ENCODE measurements at regions of chr2 and their contacts with region 1.

Region 1: DNA sequence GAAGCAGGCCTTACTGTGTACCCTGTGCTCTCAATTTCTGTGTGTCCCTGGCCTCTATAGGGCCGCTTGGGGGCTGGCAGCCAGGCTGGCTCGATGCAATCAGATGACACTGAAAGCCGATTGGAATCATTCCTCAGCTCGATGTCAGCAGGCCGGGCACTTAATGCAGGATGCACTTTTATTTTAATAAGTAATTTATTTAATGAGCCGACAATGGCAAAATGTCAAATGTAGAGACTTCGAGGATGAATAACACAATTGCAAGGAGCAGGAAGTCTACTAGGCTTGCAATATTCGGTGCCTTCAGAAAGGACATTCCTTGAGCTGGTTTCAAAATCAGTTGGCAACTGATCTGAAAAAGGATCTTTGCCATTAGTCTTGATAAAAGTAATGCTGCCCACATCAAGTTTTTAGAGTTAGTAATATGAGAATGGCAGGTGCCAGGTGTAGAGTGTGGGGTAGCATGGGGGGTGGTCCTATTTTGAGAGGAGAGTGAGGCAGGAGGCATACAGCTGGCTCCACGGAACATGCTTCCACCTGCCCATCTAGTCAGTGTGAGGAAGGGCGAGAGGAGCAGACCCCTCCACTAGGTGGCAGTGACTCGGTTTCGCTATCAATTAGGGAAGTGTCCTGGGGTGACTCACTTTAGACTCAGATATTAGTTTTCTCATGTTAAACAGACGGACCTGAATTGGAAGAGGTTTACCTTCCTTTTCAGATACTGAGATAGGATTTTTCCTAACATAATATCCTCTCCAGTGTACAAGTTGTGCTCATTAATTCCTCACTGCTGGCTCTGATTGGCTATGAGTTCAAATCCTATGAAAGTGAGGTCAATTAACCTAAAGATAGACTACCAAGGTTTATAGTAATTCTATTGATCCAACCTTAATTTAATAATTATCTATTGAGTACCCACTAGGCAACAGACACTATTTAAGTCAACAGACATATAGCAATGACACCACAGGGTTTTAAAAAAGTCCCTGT is 80.9 kb downstream of the NABP1 start:
- DNase-seq: peak; percentile 39
- ATAC-seq: peak; percentile 100
- H3K4me3 Mint-ChIP-seq: peak overlapping the region; percentile 13
- H3K27ac Mint-ChIP-seq: peak overlapping the region; percentile 8
- H3K4me1 Mint-ChIP-seq: peaks cover 6% of the 10 kb centered on the region
- H3K27me3 Mint-ChIP-seq: no peaks in the 10 kb centered on the region
- CTCF ChIP-seq: no peak

Region 2: GRCh38 chr2:191691016-191691735 is 67.6 kb before region 1 on chr2:
- CTCF ChIA-PET with region 1: no interaction called
- POLR2A ChIA-PET with region 1: no interaction called
- intact Hi-C with region 1: loop called (anchors 2 kb)
- DNase-seq: no peak
- ATAC-seq: peak; percentile 85
- H3K4me3 Mint-ChIP-seq: no peak overlapping the region
- H3K27ac Mint-ChIP-seq: peak overlapping the region; percentile 41
- H3K4me1 Mint-ChIP-seq: peaks cover 34% of the 10 kb centered on the region
- H3K27me3 Mint-ChIP-seq: no peaks in the 10 kb centered on the region
- CTCF ChIP-seq: no peak

Region 3: GRCh38 chr2:191783416-191783815 is 24.6 kb after region 1 on chr2:
- CTCF ChIA-PET with region 1: no interaction called
- POLR2A ChIA-PET with region 1: no interaction called
- intact Hi-C with region 1: no loop called
- DNase-seq: no peak
- ATAC-seq: no peak
- H3K4me3 Mint-ChIP-seq: no peak overlapping the region
- H3K27ac Mint-ChIP-seq: no peak overlapping the region
- H3K4me1 Mint-ChIP-seq: peaks cover 7% of the 10 kb centered on the region
- H3K27me3 Mint-ChIP-seq: peaks cover 4% of the 10 kb centered on the region
- CTCF ChIP-seq: no peak

Region 4: DNA sequence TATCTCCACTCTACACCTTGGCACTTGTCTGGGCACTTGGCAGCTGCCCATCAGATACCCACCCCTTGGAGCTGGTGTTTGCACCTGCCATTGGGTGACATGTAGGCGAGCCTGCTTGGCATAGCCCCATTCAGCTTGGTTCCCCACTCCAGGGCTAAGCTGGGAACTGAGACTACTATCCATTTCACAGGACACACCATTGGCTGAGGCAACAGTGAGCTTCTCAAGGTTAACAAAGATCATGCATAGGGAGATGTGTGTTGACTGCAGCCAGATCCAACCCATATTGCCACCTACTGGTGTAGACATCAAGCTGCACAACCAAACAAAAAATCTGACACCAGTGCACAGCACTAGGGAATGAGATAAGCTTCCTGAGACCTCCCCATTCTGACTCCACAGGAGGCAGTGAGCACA is 1825.7 kb after region 1 on chr2:
- CTCF ChIA-PET with region 1: no interaction called
- POLR2A ChIA-PET with region 1: no interaction called
- intact Hi-C with region 1: loop called (anchors 10 kb)
- DNase-seq: no peak
- ATAC-seq: peak; percentile 70
- H3K4me3 Mint-ChIP-seq: no peak overlapping the region
- H3K27ac Mint-ChIP-seq: no peak overlapping the region
- H3K4me1 Mint-ChIP-seq: no peaks in the 10 kb centered on the region
- H3K27me3 Mint-ChIP-seq: no peaks in the 10 kb centered on the region
- CTCF ChIP-seq: no peak